HCT116 (cell line): ENCODE measurements at regions of chr2 and their contacts with region 1.

Region 1: DNA sequence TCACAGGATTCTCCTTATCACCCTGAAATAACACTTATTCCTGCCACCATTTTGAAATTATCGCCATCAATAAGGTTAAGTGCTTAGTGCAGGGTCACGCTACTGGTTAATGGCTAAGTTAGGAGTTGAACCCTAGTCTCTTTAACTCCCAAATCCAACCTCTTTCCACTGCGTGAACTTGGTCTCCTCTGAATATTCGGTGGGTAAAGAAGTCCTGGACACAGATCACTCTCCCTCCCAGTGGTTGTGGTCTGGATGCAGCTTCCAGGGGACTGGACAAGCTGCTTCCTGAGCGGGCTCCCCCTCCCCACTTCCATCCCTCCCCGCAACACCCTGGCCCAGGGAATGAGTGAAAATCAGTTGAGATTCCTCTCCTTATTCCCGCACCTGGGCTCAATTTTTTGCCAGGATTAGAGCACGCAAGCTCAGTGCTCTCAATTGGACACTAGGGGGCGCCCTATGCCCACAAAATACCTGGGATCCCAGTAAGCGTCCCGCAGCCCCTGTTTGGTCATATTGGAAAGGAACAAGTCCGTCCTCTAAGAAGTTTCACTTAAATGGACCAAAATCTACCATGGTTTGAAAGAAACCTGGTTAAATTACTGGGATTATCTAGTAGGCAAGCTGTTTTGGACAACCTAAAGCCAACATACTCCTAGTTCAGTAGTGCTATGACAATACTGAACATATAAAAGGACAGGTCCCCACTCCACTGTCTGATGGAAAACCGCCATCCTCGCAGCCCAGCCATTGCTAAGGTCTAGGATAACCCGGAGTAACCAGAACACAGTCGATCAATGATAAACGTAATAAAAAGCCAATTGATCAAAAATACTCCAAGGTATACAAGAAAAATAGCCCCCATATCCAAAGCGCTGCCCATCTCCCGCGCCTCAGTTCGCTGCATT is 40.4 kb downstream of the DHRS9 start:
- DNase-seq: peak; percentile 67
- ATAC-seq: peak; percentile 99
- H3K4me3 ChIP-seq: no peak overlapping the region
- H3K27ac ChIP-seq: no peak overlapping the region
- H3K4me1 ChIP-seq: peaks cover 0 to 8% of the 10 kb centered on the region in 2 experiments; a peak in 1 of 4 replicates
- H3K27me3 ChIP-seq: peaks cover 5% of the 10 kb centered on the region; the same call in 1 of the 2 replicates
- CTCF ChIP-seq: peak; percentile 84 to 97 (median 88)
- POLR2A ChIP-seq: no peak
- RAD21 ChIP-seq: peak; percentile 92

Region 2: GRCh38 chr2:169087757-169088379 is 21.9 kb before region 1 on chr2:
- CTCF ChIA-PET with region 1: no interaction called
- POLR2A ChIA-PET with region 1: no interaction called
- RAD21 ChIA-PET with region 1: no interaction called
- intact Hi-C with region 1: no loop called
- DNase-seq: no peak
- ATAC-seq: peak; percentile 32; the same call in 1 of the 2 replicates
- H3K4me3 ChIP-seq: no peak overlapping the region
- H3K27ac ChIP-seq: no peak overlapping the region
- H3K4me1 ChIP-seq: peaks cover 11 to 15% of the 10 kb centered on the region in 2 experiments; a peak in 3 of 4 replicates
- H3K27me3 ChIP-seq: no peaks in the 10 kb centered on the region
- CTCF ChIP-seq: peak in 1 of 3 experiments; percentile 12; a peak in 1 of 6 replicates
- POLR2A ChIP-seq: no peak
- RAD21 ChIP-seq: peak; percentile 23

Region 3: DNA sequence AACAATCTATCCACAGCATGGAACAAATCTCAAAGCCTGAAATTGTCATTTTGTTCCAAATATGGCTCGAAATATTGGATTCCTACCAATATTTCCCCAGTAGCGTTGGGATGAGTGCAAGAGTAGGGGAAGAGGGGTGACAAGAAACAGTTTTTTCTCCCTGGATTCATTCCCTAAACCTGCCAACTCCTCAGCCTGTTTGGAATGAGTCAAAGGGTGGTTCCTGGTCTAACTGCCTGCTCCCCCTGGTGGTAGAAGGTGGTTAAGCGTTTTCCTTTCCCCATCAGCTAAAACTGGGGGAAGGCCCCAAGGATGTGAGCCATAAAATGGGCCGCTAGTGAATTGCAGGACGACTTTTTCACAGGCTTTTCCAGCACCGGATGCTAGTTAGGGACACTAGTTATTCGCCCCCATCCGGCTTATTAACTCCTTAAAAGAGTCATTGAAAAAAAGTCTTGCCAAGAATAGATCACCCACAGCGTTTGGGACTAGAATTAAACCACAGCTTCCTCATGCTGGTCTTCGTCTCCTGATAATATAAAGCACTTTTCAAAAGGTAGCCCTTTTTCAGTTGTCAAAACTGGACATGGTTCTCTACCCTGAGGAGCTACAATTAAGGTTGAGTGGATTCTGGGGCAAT is 32.1 kb after region 1 on chr2:
- CTCF ChIA-PET with region 1: interaction called, 25 read pairs
- POLR2A ChIA-PET with region 1: no interaction called
- RAD21 ChIA-PET with region 1: no interaction called
- intact Hi-C with region 1: no loop called
- DNase-seq: peak; percentile 49
- ATAC-seq: peak; percentile 97
- H3K4me3 ChIP-seq: no peak overlapping the region
- H3K27ac ChIP-seq: no peak overlapping the region
- H3K4me1 ChIP-seq: no peaks in the 10 kb centered on the region
- H3K27me3 ChIP-seq: no peaks in the 10 kb centered on the region
- CTCF ChIP-seq: peak; percentile 68 to 93 (median 84)
- POLR2A ChIP-seq: no peak
- RAD21 ChIP-seq: peak; percentile 59

Region 4: DNA sequence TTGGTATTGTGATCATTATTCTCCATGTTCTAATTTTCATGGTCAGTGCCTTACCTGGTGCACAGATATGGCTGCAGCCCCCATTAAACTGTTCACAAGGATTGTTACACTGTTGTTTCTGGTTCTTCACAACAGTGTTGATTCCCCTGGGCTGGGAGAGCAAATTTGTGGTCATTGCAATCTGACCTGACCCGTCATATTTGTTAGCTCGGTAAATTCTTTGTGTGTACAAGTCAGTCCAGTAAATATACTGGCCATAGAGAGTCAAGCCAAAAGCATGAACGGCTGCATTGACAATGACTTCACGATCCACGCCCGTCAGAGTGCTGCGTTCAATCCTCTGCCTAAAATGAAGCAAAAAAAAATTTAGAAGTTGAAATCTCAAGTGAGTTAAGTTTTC is 94.2 kb after region 1 on chr2:
- CTCF ChIA-PET with region 1: no interaction called
- POLR2A ChIA-PET with region 1: no interaction called
- RAD21 ChIA-PET with region 1: no interaction called
- intact Hi-C with region 1: no loop called
- DNase-seq: no peak
- ATAC-seq: no peak
- H3K4me3 ChIP-seq: no peak overlapping the region
- H3K27ac ChIP-seq: no peak overlapping the region
- H3K4me1 ChIP-seq: no peaks in the 10 kb centered on the region
- H3K27me3 ChIP-seq: no peaks in the 10 kb centered on the region
- CTCF ChIP-seq: no peak
- POLR2A ChIP-seq: no peak
- RAD21 ChIP-seq: no peak

Region 5: GRCh38 chr2:169275696-169276444 is 166.1 kb after region 1 on chr2:
- CTCF ChIA-PET with region 1: interaction called, 25 read pairs
- POLR2A ChIA-PET with region 1: no interaction called
- RAD21 ChIA-PET with region 1: interaction called in 1 of 2 experiments, 6 read pairs
- intact Hi-C with region 1: loop called (anchors 1 kb)
- DNase-seq: peak; percentile 13
- ATAC-seq: no peak
- H3K4me3 ChIP-seq: no peak overlapping the region
- H3K27ac ChIP-seq: no peak overlapping the region
- H3K4me1 ChIP-seq: no peaks in the 10 kb centered on the region
- H3K27me3 ChIP-seq: peaks cover 8% of the 10 kb centered on the region; the same call in 1 of the 2 replicates
- CTCF ChIP-seq: peak; percentile 29 to 45 (median 32); a peak in 4 of 6 replicates
- POLR2A ChIP-seq: no peak
- RAD21 ChIP-seq: peak; percentile 56

Region 6: DNA sequence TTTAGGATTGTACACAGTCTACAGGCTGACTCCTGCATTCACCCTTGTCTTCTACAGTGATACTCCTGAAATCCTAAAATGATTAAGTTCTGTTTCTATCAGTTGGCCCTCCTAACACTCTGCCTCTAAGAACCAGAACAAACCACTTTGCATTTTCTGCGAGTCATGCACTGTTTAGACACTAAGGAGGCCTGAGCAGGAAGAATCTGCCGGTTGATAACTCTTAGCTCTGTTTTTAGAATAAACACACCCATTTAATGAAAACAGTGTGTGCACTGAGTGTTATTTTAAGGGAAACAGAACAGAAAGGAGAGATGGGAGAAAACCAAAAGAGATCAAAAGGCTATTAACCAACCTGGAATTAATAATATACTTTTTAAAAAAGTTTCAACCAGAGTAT is 666.0 kb after region 1 on chr2:
- CTCF ChIA-PET with region 1: no interaction called
- POLR2A ChIA-PET with region 1: no interaction called
- RAD21 ChIA-PET with region 1: no interaction called
- intact Hi-C with region 1: loop called (anchors 10 kb)
- DNase-seq: no peak
- ATAC-seq: no peak
- H3K4me3 ChIP-seq: no peak overlapping the region
- H3K27ac ChIP-seq: no peak overlapping the region
- H3K4me1 ChIP-seq: no peaks in the 10 kb centered on the region; a peak in 1 of 4 replicates
- H3K27me3 ChIP-seq: no peaks in the 10 kb centered on the region
- CTCF ChIP-seq: no peak
- POLR2A ChIP-seq: no peak
- RAD21 ChIP-seq: no peak